ENCODE measurements at regions of chr13 and their contacts with region 1.

Region 1: GRCh38 chr13:29702912-29703351 is 107.4 kb upstream of the SLC7A1 start:
- DNase-seq: peak in 1 of 4 donors; percentile 18
- ATAC-seq: peak; percentile 27
- H3K4me3 ChIP-seq: no peak overlapping the region
- H3K27ac ChIP-seq: no peak overlapping the region
- H3K4me1 ChIP-seq: no peaks in the 10 kb centered on the region
- H3K27me3 ChIP-seq: no peaks in the 10 kb centered on the region
- CTCF ChIP-seq: no peak
- POLR2A ChIP-seq: no peak

Region 2: DNA sequence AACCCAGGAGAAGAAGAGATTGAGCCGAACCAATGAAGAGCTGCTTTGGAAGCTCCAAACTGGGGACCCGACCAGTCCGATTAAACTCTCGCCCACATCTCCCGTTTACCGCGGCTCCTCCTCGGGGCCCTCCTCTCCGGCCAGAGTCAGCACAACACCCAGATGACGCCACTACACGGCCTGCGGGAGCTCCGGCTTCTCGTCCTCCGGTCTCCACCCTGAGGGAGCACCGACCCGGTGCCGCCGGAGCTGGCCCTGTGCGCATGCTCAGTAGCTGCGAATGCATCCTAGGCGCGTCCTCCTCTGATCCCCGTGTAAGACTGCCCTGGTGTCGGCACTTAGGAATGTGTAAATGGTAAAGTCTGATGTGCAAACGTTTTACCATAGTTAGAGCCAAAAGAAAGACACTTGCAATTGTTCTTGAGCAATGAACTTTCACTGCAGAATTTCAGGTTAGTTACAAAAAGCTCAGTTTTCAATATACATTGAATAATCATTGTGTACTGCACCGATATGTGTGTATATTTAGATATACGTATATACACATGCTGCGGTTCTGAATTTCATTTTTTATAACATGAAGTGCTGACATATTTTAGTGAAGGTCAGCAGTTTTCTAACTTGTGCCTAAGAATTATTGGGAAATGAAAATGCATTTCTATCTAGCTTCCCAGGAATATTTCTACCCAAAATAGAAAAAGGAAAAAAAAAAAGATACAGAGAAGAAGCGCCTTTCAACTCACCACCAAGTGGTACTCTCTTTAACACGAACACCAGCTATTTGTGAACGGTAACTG is 199.7 kb before region 1 on chr13:
- intact Hi-C with region 1: loop called (anchors 5 kb)
- DNase-seq: no peak
- ATAC-seq: no peak
- H3K4me3 ChIP-seq: no peak overlapping the region
- H3K27ac ChIP-seq: no peak overlapping the region
- H3K4me1 ChIP-seq: peaks cover 20% of the 10 kb centered on the region
- H3K27me3 ChIP-seq: no peaks in the 10 kb centered on the region
- CTCF ChIP-seq: no peak
- POLR2A ChIP-seq: no peak

Measured in body of pancreas (tissue), 4 donors.